ENCODE measurements at regions of chr3 and their contacts with region 1.

Region 1: DNA sequence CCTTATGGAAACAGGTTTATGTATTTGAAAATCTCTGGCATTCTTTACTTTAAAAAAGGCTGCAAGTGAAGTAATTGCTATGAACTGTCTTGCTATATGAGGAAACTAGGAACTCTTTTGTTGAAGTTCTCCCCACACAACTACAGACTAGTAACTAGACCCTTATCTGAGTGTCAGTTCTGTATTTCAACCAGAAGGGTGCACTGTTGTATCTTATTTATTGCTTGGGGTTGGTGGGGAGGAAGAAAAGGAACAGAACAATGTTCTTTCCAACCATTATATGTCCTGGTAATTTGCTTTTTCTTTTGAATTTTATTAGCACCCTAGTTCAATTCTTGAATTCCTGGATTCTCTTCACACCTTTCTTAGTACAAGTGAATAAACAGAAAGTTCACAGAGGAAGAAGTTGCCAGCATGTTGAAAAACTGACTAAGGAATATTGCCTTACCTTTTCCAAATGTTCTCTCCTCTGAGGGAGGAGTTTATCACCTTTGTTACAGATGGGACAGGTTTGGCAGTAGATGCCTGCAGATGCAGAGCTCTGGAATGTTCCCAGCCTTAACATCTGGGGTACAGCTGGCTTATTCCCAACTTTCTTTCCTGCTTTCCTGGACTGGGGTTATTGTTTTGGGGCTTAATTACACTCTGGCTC is 162.4 kb upstream of the CFAP20DC start:
- DNase-seq: no peak
- H3K4me3 Mint-ChIP-seq: no peak overlapping the region
- H3K27ac Mint-ChIP-seq: no peak overlapping the region
- H3K4me1 Mint-ChIP-seq: peaks cover 11% of the 10 kb centered on the region
- H3K27me3 Mint-ChIP-seq: peaks cover 14% of the 10 kb centered on the region

Region 2: GRCh38 chr3:58052373-58053273 is 1159.6 kb before region 1 on chr3:
- intact Hi-C with region 1: no loop called
- DNase-seq: no peak
- H3K4me3 Mint-ChIP-seq: no peak overlapping the region
- H3K27ac Mint-ChIP-seq: no peak overlapping the region
- H3K4me1 Mint-ChIP-seq: peaks cover 23% of the 10 kb centered on the region
- H3K27me3 Mint-ChIP-seq: peaks cover 1% of the 10 kb centered on the region

Region 3: DNA sequence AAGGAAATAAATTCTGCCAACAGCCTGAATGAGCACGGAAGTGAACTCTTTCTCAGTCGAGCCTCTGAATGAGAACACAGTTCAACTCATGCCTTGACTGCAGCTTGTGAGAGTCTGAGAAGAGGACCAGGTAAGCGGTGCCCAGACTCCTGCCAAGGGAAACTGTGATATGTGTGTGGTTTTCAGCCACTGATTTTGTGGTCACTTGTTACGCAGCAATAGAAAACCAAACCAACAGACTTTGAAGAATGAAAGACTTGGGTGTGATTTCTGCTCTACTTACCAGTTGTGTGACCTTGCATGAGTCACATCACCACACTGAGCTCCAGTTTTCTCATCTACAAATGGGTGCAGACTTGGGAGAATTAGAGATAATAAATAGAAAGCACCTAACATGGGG is 604.4 kb before region 1 on chr3:
- intact Hi-C with region 1: no loop called
- DNase-seq: no peak
- H3K4me3 Mint-ChIP-seq: no peak overlapping the region
- H3K27ac Mint-ChIP-seq: no peak overlapping the region
- H3K4me1 Mint-ChIP-seq: peaks cover 13% of the 10 kb centered on the region
- H3K27me3 Mint-ChIP-seq: peaks cover 2% of the 10 kb centered on the region

Region 4: GRCh38 chr3:59235634-59236012 is 23.4 kb after region 1 on chr3:
- intact Hi-C with region 1: loop called (anchors 1 kb)
- DNase-seq: peak; percentile 37
- H3K4me3 Mint-ChIP-seq: peak overlapping the region; percentile 58
- H3K27ac Mint-ChIP-seq: peak overlapping the region; percentile 27
- H3K4me1 Mint-ChIP-seq: peaks cover 29% of the 10 kb centered on the region
- H3K27me3 Mint-ChIP-seq: peaks cover 6% of the 10 kb centered on the region

Region 5: GRCh38 chr3:59313365-59313764 is 101.1 kb after region 1 on chr3:
- intact Hi-C with region 1: loop called (anchors 1 kb)
- DNase-seq: peak; percentile 22
- H3K4me3 Mint-ChIP-seq: no peak overlapping the region
- H3K27ac Mint-ChIP-seq: peak overlapping the region; percentile 49
- H3K4me1 Mint-ChIP-seq: peaks cover 47% of the 10 kb centered on the region
- H3K27me3 Mint-ChIP-seq: peaks cover 2% of the 10 kb centered on the region

Region 6: GRCh38 chr3:59341459-59341858 is 129.2 kb after region 1 on chr3:
- intact Hi-C with region 1: no loop called
- DNase-seq: no peak
- H3K4me3 Mint-ChIP-seq: no peak overlapping the region
- H3K27ac Mint-ChIP-seq: no peak overlapping the region
- H3K4me1 Mint-ChIP-seq: peaks cover 7% of the 10 kb centered on the region
- H3K27me3 Mint-ChIP-seq: no peaks in the 10 kb centered on the region

Region 7: DNA sequence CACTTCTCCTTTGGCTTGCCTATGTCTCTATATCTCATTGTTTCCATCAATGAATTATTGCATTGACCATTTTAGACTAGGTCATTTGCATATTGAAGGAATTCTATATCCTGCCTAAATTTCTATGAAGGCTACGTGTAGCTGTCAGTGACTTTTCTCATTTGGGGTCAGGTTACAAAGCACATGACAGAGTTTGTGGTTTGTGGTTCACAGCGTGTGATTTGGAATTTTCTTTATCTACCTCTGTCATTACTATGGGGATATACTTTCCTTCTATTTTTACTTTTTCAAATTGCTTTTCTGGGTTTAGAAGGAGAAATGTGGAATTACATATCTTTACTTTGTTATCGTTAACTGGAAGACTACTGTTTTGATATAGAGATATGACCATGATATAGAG is 154.9 kb after region 1 on chr3:
- intact Hi-C with region 1: no loop called
- DNase-seq: no peak
- H3K4me3 Mint-ChIP-seq: no peak overlapping the region
- H3K27ac Mint-ChIP-seq: no peak overlapping the region
- H3K4me1 Mint-ChIP-seq: peaks cover 37% of the 10 kb centered on the region
- H3K27me3 Mint-ChIP-seq: no peaks in the 10 kb centered on the region

Region 8: DNA sequence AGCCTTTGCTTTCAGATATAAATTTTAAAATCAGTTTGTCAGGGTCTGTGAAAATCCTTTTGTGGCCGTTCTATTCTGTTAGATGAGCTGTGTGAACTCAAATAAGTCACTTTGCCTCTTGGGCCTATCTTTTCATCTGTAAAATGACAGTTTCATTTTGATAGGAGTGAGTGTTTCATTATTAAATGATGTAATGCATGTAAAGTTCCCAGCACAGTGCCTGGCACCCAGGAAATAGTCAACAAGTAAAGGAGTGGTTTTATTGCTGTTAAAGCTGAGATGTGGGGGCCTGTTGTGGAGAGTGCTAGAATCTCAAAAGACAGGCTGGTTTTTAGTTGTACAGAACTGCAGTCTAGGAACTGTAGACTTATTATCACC is 232.0 kb after region 1 on chr3:
- intact Hi-C with region 1: loop called (anchors 2 kb)
- DNase-seq: no peak
- H3K4me3 Mint-ChIP-seq: peak overlapping the region; percentile 74
- H3K27ac Mint-ChIP-seq: peak overlapping the region; percentile 94
- H3K4me1 Mint-ChIP-seq: peaks cover 61% of the 10 kb centered on the region
- H3K27me3 Mint-ChIP-seq: no peaks in the 10 kb centered on the region

Region 9: GRCh38 chr3:59575113-59576001 is 363.1 kb after region 1 on chr3:
- intact Hi-C with region 1: loop called (anchors 1 kb)
- DNase-seq: peak; percentile 72
- H3K4me3 Mint-ChIP-seq: no peak overlapping the region
- H3K27ac Mint-ChIP-seq: peak overlapping the region; percentile 15
- H3K4me1 Mint-ChIP-seq: peaks cover 10% of the 10 kb centered on the region
- H3K27me3 Mint-ChIP-seq: no peaks in the 10 kb centered on the region

Region 10: GRCh38 chr3:59857589-59858346 is 645.5 kb after region 1 on chr3:
- intact Hi-C with region 1: loop called (anchors 1 kb)
- DNase-seq: peak; percentile 51
- H3K4me3 Mint-ChIP-seq: no peak overlapping the region
- H3K27ac Mint-ChIP-seq: peak overlapping the region; percentile 19
- H3K4me1 Mint-ChIP-seq: peaks cover 12% of the 10 kb centered on the region
- H3K27me3 Mint-ChIP-seq: no peaks in the 10 kb centered on the region

Region 11: DNA sequence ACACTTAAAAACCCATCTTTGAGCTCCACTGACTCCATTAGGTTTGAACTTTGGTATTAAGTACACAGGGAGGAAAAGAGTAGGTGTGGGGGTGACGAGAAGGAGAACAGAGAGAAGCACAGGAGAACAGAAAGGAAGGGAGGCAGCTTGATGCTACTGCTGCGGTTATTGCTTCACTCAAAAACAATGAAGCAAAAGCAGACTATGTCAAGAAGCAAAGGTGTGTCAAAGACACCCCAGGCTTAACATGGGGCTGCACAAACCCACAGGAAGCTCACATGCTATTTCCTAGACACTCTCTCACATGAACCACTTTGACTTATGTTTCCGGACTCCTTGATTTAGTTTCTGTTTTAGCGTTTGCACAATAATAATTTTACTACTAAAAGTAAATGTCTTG is 798.5 kb after region 1 on chr3:
- intact Hi-C with region 1: loop called (anchors 5 kb)
- DNase-seq: peak; percentile 73
- H3K4me3 Mint-ChIP-seq: peak overlapping the region; percentile 74
- H3K27ac Mint-ChIP-seq: peak overlapping the region; percentile 91
- H3K4me1 Mint-ChIP-seq: peaks cover 76% of the 10 kb centered on the region
- H3K27me3 Mint-ChIP-seq: peaks cover 2% of the 10 kb centered on the region

Measured in activated T-helper 1 cell treated with anti-CD3 and anti-CD28 coated beads, Interleukin-12 subunit alpha, Interleukin-12 subunit beta, Interleukin-2, Interleukin-4 antibody, amounts not matched to agents 30 ng/mL and 10 ng/mL and 1 ng/mL, durations not matched to agents 14 hours and 24 hours and 36 hours (primary cell).